ENCODE measurements at regions of chr1 and their contacts with region 1.

Region 1: DNA sequence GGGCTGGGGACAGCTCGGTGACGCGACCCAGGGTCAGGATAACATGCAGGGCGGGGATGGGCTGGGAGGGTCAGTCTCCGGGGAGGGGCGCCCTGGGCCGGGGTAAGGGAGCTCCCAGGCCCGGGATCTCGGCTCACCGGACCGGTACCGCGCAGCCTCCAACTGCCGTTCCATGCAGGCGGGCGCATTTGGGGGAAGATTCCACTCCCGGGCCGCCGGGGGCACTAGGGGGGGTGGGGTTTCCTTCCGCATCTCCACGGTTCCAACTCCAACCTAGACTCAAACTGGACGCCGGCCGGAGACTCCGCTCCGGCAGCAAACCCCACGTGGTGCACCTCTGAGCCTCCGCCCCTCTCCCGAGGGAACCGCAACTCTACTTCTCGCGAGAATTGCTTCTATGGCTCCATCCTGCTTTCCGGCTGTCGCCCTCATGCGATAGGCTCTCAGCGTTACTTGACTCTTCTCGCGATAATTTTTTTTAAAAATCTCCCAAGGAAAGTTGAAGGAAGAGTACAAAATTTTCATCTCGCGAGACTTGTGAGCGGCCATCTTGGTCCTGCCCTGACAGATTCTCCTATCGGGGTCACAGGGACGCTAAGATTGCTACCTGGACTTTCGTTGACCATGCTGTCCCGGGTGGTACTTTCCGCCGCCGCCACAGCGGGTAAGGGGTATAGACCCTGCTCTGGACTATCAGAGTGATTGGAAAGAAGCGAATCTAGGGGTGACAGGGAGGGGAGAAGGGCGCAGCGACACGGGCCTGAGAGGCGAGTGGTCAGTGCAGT is at the starts of genes ATP5PB and WDR77:
- DNase-seq: peak; percentile 89 to 98
- H3K4me3 ChIP-seq: peak within 1 kb of the TSS; percentile 85 to 96
- H3K27ac ChIP-seq: peak within 1 kb of the TSS; percentile 80 to 84
- H3K4me1 ChIP-seq: peaks cover 13 to 29% of the 10 kb centered on the region in 2 donors
- H3K27me3 ChIP-seq: no peaks in the 10 kb centered on the region
- CTCF ChIP-seq: peak in 1 of 3 experiments; percentile 7
- total RNA-seq, gene ATP5PB: 24.7 TPM
- total RNA-seq, gene WDR77: 31.2 TPM

Region 2: GRCh38 chr1:110963691-110964399 is 485.3 kb before region 1 on chr1 and contains the start of gene LRIF1:
- intact Hi-C with region 1: loop called (anchors 10 kb)
- DNase-seq: peak; percentile 98 to 99
- H3K4me3 ChIP-seq: peak within 1 kb of the TSS; percentile 52 to 73
- H3K27ac ChIP-seq: peak within 1 kb of the TSS; percentile 92 to 94
- H3K4me1 ChIP-seq: no peaks in the 10 kb centered on the region
- H3K27me3 ChIP-seq: no peaks in the 10 kb centered on the region
- CTCF ChIP-seq: peak; percentile 11 to 68 (median 46)
- total RNA-seq, gene LRIF1: 3.5 TPM

Region 3: GRCh38 chr1:111139956-111140679 is 309.0 kb before region 1 on chr1 and contains the starts of genes CEPT1 and DRAM2:
- intact Hi-C with region 1: loop called (anchors 2 kb)
- DNase-seq: peak; percentile 84 to 98
- H3K4me3 ChIP-seq: peak within 1 kb of the TSS; percentile 84 to 97
- H3K27ac ChIP-seq: peak within 1 kb of the TSS; percentile 90 to 98
- H3K4me1 ChIP-seq: peaks cover 0 to 15% of the 10 kb centered on the region in 2 donors
- H3K27me3 ChIP-seq: no peaks in the 10 kb centered on the region
- CTCF ChIP-seq: no peak
- total RNA-seq, gene CEPT1: 6.6 TPM
- total RNA-seq, gene DRAM2: 60.2 TPM

Region 4: GRCh38 chr1:111342471-111342870 is 106.6 kb before region 1 on chr1:
- intact Hi-C with region 1: no loop called
- DNase-seq: no peak
- H3K4me3 ChIP-seq: no peak overlapping the region
- H3K27ac ChIP-seq: no peak overlapping the region
- H3K4me1 ChIP-seq: no peaks in the 10 kb centered on the region
- H3K27me3 ChIP-seq: no peaks in the 10 kb centered on the region
- CTCF ChIP-seq: no peak

Region 5: DNA sequence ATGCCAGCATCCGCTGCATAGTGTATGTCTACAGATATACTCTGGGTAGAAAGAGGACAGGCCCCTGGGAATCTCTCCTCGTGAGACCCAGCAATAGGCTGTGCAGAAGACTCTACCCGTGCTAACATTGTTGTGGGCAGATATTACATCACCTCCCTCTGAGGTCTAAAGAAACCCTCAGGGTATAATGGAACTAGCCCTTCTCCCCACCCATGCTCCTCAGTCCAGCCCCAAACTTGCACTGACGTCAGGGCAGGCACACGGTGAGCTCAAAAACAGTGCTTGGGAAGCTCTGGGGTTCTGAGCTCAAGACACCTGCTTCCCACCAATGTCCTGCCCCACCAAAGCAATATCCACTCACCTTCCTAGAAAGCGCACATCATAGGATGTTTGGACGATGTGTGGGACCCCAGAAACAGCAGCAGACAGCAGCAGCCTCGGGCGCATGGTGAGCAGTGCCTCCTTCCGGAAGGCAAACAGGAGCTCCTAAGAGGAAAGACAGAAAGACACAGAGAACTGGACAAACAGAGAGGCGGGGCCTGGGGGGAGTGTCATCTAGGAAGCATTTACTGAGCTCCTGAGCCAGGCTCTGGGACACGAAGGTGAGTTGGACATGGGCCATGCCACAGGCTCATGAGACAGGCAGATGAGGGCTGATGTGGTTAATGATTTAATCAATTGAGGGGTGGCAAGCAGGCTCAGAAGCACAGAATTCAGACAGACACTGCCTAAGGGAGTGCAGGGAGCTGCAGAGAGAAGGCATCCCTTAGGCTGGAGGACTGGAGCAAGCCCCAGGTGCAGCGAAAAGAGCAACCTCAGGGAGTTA is 26.3 kb before region 1 on chr1:
- intact Hi-C with region 1: no loop called
- DNase-seq: no peak
- H3K4me3 ChIP-seq: no peak overlapping the region
- H3K27ac ChIP-seq: no peak overlapping the region
- H3K4me1 ChIP-seq: no peaks in the 10 kb centered on the region
- H3K27me3 ChIP-seq: no peaks in the 10 kb centered on the region
- CTCF ChIP-seq: no peak

Measured in ascending aorta (tissue), 2 donors.